AG04449 (cell line): ENCODE measurements at regions of chr15 and their contacts with region 1.

Region 1: GRCh38 chr15:80173022-80173759 is 20.4 kb downstream of the FAH start:
- DNase-seq: no peak
- H3K4me3 ChIP-seq: no peak overlapping the region
- CTCF ChIP-seq: peak; percentile 77

Region 2: DNA sequence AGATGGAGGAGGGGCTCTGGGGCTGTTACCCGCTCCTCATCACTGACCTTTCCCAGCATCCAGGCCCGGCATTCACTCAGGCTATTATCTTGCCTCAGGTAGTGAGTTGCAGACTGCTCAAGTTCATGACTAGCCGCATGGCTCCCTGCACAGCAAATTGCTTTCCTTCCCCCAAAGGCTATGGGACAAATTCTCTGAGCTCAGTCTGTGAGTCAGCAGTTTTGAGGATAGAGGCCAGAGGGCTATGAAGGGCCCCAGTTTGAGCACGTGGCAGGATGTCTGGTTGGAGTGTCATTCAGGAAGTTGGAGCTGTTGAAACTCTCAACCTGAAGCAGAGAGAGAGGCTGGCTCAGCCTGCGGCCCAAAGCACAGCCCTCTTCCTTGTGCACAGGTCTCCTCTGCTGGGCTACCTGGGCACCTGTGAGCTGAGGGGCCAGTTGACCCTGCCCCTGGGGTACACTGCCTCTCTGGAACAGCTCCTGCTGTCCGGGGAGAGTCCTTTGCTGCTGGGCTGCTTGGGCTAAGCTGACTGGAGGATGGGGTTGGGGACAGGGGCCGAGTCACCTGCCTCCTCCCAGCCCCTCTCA is 12.5 kb before region 1 on chr15:
- CTCF ChIA-PET with region 1: interaction called, 42 read pairs
- POLR2A ChIA-PET with region 1: interaction called, 4 read pairs
- DNase-seq: peak; percentile 72
- H3K4me3 ChIP-seq: no peak overlapping the region
- CTCF ChIP-seq: no peak